Spleen (tissue), 13 donors: ENCODE measurements at regions of chr6 and their contacts with region 1.

Region 1: GRCh38 chr6:137094411-137095008 is 49.7 kb upstream of the IL20RA start:
- DNase-seq: no peak
- H3K4me3 ChIP-seq: peak overlapping the region in 1 of 8 donors; percentile 21
- H3K27ac ChIP-seq: peak overlapping the region in 4 of 8 donors; percentile 2 to 61 (median 38)
- H3K4me1 ChIP-seq: peaks cover 0 to 61% (median 21%) of the 10 kb centered on the region in 6 donors
- H3K27me3 ChIP-seq: no peaks in the 10 kb centered on the region
- CTCF ChIP-seq: peak; percentile 17 to 77 (median 68)
- POLR2A ChIP-seq: no peak

Region 2: GRCh38 chr6:137136065-137136464 is 41.6 kb after region 1 on chr6:
- intact Hi-C with region 1: no loop called
- DNase-seq: no peak
- H3K4me3 ChIP-seq: no peak overlapping the region
- H3K27ac ChIP-seq: no peak overlapping the region
- H3K4me1 ChIP-seq: no peaks in the 10 kb centered on the region
- H3K27me3 ChIP-seq: no peaks in the 10 kb centered on the region
- CTCF ChIP-seq: peak in 1 of 11 experiments; percentile 10
- POLR2A ChIP-seq: no peak

Region 3: DNA sequence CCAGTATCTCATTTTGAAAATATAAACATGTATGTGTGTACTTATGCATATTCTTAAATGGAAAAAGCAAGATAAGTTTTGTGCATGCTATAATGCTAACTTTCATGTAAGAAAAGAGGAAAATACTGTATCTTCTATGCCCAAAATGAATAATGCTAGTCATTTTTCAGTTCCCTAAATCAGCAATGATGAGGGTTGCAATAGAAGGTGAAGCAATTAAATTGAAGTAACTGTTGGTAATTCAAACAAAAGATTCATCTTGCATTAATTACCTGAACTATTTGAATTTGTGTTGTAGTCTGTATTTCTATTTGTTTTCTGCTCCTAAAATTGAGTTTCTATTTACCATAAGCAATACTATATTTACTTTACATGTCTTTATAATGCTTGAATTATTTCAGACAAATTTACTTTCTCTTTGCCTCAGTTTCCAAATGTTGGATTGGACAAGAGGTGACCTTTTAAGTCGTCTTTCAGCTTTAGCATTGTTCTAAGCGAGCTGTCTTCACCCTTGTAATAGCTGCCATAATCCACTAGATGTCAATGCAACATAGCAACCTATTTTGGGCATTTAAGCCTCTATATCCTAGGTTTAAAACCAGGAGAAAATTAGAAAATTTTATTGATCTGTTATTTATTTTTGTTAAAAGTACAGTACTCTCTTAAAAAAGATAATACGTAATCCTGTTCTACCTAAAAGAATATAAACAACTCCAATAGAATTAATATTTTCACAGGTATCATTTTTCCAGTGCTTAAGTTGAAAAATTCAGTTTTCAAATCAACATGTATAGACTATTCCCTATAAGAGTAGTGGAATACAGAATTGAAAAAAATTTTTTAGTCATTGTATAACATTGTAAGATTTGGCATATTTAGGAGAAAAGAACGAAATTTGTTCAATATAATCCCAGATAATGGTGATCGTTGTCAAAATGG is 177.0 kb after region 1 on chr6:
- intact Hi-C with region 1: loop called (anchors 10 kb)
- DNase-seq: no peak
- H3K4me3 ChIP-seq: no peak overlapping the region
- H3K27ac ChIP-seq: peak overlapping the region in 2 of 8 donors; percentile 14 to 27
- H3K4me1 ChIP-seq: peaks cover 0 to 27% (median 13%) of the 10 kb centered on the region in 6 donors
- H3K27me3 ChIP-seq: no peaks in the 10 kb centered on the region
- CTCF ChIP-seq: peak; percentile 75 to 91 (median 85)
- POLR2A ChIP-seq: no peak